Heart left ventricle (tissue), 16 donors: ENCODE measurements at regions of chr21 and their contacts with region 1.

Region 1: DNA sequence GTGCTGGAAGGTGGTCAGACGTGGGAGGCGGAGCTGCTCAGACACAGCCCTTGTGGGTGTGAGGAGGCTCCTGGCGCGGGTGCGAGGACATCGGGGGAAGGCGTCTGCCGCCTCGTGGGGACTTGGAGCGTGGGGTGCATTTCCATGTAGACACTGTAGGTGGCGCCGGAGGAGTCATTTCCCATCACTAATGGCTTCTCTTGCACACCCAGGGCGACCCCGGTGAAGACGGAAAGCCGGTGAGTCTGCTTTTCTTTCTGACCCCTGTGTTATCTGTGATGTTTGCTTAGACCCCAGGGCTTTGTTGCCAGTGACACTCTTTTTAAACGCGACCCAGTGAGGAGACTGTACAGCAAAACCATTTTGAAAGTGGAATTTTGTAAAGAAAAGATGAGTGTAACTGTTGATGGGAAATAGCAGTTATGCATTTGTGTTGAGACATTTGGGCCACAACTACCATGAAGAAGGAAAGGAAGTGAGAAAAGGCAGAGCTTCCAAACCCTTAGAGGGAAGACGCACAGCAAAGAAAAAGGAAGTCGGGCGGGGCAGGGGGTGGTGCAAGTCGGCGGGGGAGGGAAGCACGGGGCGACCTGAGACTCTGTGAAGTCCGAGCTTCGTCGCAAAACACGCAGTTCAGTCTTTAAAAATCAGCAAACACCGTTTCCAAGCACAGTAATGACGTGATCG is 64.0 kb downstream of the SLC19A1 start:
- DNase-seq: peak; percentile 50 to 86 (median 71)
- ATAC-seq: peak; percentile 23 to 65 (median 48)
- H3K4me3 ChIP-seq: peak overlapping the region in 7 of 12 donors; percentile 10 to 44 (median 26)
- H3K27ac ChIP-seq: peak overlapping the region in 9 of 12 donors; percentile 8 to 92 (median 36)
- H3K4me1 ChIP-seq: peaks cover 0 to 43% (median 10%) of the 10 kb centered on the region in 12 donors
- H3K27me3 ChIP-seq: no peaks in the 10 kb centered on the region
- CTCF ChIP-seq: peak; percentile 70 to 89 (median 79)
- POLR2A ChIP-seq: peak in 1 of 2 donors; percentile 20

Region 2: GRCh38 chr21:45534663-45535331 is 56.5 kb after region 1 on chr21:
- intact Hi-C with region 1: loop called in 1 of 10 experiments (anchors 5 kb)
- DNase-seq: peak; percentile 70 to 90 (median 85)
- ATAC-seq: peak; percentile 77 to 94 (median 87)
- H3K4me3 ChIP-seq: peak overlapping the region in 1 of 12 donors; percentile 15
- H3K27ac ChIP-seq: peak overlapping the region in 8 of 12 donors; percentile 7 to 85 (median 57)
- H3K4me1 ChIP-seq: peaks cover 0 to 39% (median 11%) of the 10 kb centered on the region in 12 donors
- H3K27me3 ChIP-seq: no peaks in the 10 kb centered on the region
- CTCF ChIP-seq: no peak
- POLR2A ChIP-seq: no peak

Region 3: GRCh38 chr21:45590246-45590725 is 112.0 kb after region 1 on chr21:
- intact Hi-C with region 1: loop called in 3 of 10 experiments (anchors 2 to 10 kb)
- DNase-seq: peak; percentile 56 to 88 (median 65)
- ATAC-seq: peak in 3 of 4 donors; percentile 88 to 95 (median 93)
- H3K4me3 ChIP-seq: peak overlapping the region; percentile 26 to 64 (median 50)
- H3K27ac ChIP-seq: peak overlapping the region in 1 of 12 donors; percentile 9
- H3K4me1 ChIP-seq: peaks cover 0 to 19% (median 6%) of the 10 kb centered on the region in 12 donors
- H3K27me3 ChIP-seq: peaks cover 0 to 47% (median 23%) of the 10 kb centered on the region in 9 donors
- CTCF ChIP-seq: no peak
- POLR2A ChIP-seq: no peak

Region 4: DNA sequence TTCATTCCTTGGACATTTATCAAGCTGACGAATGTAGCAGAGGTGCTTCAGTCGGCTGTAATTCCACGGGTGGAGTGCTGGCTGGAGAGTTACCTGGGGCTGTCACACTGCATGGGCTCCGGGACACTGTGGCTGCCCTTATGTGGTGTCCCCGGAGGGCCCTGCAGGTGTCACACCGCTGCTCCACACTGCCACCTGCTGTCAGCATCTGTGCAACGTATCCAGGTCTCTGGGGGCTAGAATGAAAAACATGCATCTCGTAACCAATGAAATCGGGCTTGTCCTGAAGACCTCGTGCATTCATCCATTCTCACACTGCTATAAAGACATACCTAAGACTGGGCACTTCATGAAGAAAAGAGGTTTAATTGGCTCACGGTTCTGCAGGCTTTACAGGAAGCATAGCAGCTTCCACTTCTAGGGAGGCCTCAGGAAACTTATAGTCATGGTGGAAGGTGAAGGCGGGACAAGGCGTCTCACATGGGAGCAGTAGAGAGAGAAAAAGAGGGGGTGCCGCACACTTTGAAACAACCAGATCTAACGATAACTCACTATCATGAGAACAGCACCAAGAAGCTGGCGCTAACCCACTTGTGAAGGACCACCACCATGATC is 118.6 kb after region 1 on chr21:
- intact Hi-C with region 1: loop called in 4 of 10 experiments (anchors 2 to 10 kb)
- DNase-seq: peak; percentile 58 to 86 (median 66)
- ATAC-seq: peak in 3 of 4 donors; percentile 82 to 85 (median 85)
- H3K4me3 ChIP-seq: no peak overlapping the region
- H3K27ac ChIP-seq: no peak overlapping the region
- H3K4me1 ChIP-seq: peaks cover 0 to 3% (median 0%) of the 10 kb centered on the region in 12 donors
- H3K27me3 ChIP-seq: peaks cover 0 to 46% (median 5%) of the 10 kb centered on the region in 9 donors
- CTCF ChIP-seq: peak; percentile 63 to 88 (median 74)
- POLR2A ChIP-seq: no peak

Region 5: GRCh38 chr21:45820171-45821091 is 342.2 kb after region 1 on chr21:
- intact Hi-C with region 1: loop called in 2 of 10 experiments (anchors 2 to 10 kb)
- DNase-seq: peak; percentile 67 to 85 (median 69)
- ATAC-seq: peak; percentile 77 to 90 (median 86)
- H3K4me3 ChIP-seq: no peak overlapping the region
- H3K27ac ChIP-seq: no peak overlapping the region
- H3K4me1 ChIP-seq: peaks cover 0 to 5% (median 0%) of the 10 kb centered on the region in 12 donors
- H3K27me3 ChIP-seq: no peaks in the 10 kb centered on the region
- CTCF ChIP-seq: peak; percentile 69 to 84 (median 78)
- POLR2A ChIP-seq: no peak

Region 6: DNA sequence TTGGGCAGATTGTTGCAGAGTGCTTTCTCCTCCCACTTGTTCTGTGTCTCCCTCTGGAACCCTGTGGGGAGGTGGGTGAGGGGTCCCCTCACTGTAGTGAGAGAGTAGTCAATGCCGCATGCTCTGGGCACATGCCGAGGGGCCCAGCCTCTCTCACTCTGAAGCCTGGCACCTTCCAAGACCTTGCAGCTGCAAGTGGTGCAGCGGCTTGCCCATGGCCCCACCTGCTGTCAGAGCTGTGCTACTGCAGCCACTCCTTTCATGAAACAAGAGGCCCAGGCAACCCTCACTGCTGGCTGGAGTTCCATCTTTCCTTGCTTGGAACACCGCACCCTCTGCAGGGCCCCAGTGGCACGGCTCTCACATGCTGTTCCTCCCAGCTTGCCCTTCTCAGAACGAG is 444.9 kb after region 1 on chr21:
- intact Hi-C with region 1: loop called in 1 of 10 experiments (anchors 5 kb)
- DNase-seq: peak; percentile 66 to 83 (median 78)
- ATAC-seq: peak; percentile 87 to 94 (median 92)
- H3K4me3 ChIP-seq: no peak overlapping the region
- H3K27ac ChIP-seq: no peak overlapping the region
- H3K4me1 ChIP-seq: peaks cover 0 to 7% (median 0%) of the 10 kb centered on the region in 12 donors
- H3K27me3 ChIP-seq: no peaks in the 10 kb centered on the region
- CTCF ChIP-seq: peak; percentile 74 to 93 (median 88)
- POLR2A ChIP-seq: no peak